ENCODE measurements at regions of chr9 and their contacts with region 1.

Region 1: DNA sequence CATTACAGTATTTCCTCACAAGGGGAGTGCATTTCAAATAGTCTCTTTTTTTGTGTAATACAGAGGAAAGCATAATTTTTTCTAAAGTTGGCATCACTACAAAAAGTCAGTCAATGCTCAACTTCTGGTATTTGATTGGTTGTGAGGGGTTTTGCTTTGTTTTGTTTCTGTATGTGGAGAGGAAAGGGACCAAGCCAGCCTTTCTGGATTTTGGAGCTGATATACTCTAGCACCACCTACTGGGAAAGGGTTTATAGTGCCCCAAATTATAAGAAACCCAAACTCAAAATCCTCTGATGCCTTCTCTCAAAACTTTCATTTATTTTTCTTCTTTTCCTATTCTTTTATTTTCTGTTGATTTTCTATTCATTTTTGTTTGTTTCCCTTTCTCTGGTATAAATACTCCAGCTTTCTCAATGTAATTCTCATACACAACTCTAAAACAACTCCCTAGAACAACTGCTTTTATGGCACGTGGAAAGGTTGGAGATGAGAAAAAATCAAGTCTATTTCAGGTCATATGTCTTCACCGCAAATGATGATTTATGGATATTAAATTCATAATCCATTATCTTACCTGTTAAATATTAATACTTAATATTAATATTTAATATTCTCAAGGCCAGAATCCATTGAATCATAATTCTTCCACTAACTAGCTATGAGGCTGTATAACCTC is 69.5 kb upstream of the ANXA1 start:
- DNase-seq: no peak

Region 2: GRCh38 chr9:72280913-72281500 is 801.1 kb before region 1 on chr9:
- intact Hi-C with region 1: loop called (anchors 10 kb)
- DNase-seq: peak; percentile 37 to 95 (median 74)

Region 3: DNA sequence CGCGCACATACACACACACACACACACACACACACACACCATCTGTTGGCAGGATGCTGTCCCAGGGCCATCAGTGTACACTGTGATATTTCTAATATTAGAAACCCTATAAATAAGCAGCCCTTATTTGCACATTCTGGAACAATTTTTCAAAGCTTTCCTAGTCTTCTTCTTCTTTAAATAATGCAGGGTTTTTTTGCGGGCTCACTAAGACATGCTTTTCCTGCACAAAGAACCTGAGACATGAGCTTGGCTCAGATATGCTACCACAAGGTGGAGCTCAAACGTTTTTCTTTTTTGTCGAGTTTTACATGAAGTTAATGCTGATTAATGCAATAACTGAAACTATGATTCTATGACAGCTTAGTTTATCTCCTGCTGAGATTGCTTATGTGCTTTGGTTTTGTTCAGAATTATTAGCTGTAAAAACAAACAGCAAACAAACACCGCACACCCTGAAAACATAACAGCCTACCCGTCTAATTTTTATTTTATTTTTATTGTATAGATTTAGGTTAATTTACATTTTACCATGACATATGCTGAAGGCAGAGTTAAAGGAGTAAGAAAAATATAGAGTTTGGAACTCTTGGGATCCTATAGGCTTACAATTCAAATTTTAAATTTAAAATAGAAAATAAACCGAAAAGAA is 225.0 kb before region 1 on chr9:
- intact Hi-C with region 1: loop called (anchors 5 kb)
- DNase-seq: peak in 1 of 10 donors; percentile 20

Region 4: GRCh38 chr9:72871685-72872084 is 210.4 kb before region 1 on chr9:
- intact Hi-C with region 1: loop called (anchors 5 kb)
- DNase-seq: no peak